Dendritic cell treated with granulocyte-macrophage colony-stimulating factor and Interleukin-4, amounts not matched to agents 40 ng/mL and 50 ng/mL, for 4 days (primary cell): ENCODE measurements at regions of chr15 and their contacts with region 1.

Region 1: DNA sequence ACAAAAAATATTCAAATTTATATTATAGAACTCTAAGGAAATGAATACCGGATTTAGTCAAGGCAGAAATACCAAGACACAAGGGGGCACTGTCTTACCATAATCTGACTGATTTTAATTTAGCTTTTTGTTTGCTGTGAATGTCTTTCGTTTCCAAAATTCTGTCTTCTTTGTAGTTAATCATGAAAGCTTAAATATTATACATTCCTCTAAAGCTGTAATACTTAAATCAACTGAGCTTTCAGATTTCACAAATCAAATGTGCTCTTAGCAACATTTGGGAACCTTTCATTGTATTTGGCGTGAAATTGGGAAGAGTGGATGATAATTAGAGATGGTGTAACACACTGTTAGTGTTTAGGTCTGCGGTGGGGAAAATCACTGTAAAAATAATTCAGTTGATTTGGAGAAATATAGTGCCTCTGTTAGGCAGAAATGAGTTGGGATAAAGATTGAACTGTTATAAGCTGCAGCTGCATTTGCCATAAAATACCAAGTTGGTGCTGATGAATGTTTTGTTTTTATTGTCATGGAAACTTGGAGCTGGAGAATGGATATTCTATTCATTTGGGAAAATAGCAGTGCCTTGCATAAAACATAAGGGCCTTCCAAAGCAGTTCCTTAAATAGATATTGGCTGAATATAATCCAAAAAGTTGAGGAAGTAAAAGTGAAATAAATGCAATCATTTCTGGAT is 228.2 kb downstream of the TCF12 start:
- H3K4me3 Mint-ChIP-seq: peak overlapping the region; percentile 58
- H3K27ac Mint-ChIP-seq: peak overlapping the region; percentile 87
- H3K4me1 Mint-ChIP-seq: peaks cover 49% of the 10 kb centered on the region
- H3K27me3 Mint-ChIP-seq: no peaks in the 10 kb centered on the region

Region 2: GRCh38 chr15:57031605-57032004 is 115.0 kb before region 1 on chr15:
- intact Hi-C with region 1: no loop called
- H3K4me3 Mint-ChIP-seq: no peak overlapping the region
- H3K27ac Mint-ChIP-seq: no peak overlapping the region
- H3K4me1 Mint-ChIP-seq: peaks cover 32% of the 10 kb centered on the region
- H3K27me3 Mint-ChIP-seq: no peaks in the 10 kb centered on the region

Region 3: DNA sequence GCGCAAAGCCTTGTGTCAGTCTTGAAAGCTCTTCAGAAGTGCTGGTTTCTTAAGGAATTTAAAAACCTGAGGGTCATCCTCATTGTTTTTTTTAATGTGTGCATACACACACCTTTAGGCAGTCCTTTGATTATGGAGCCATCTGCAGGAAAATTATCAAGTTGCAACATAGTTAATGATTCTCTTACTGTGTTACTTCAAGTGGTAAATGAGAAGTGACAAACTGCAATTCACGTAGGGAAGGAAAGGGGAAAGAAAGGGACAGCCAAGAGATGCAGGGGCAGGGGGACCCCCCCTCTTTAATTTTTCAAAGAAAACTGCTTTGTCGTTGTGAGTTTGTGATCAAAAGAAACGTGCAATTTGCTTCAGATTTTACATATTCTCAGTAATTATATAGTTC is 67.2 kb after region 1 on chr15:
- intact Hi-C with region 1: loop called (anchors 2 kb)
- H3K4me3 Mint-ChIP-seq: no peak overlapping the region
- H3K27ac Mint-ChIP-seq: no peak overlapping the region
- H3K4me1 Mint-ChIP-seq: peaks cover 15% of the 10 kb centered on the region
- H3K27me3 Mint-ChIP-seq: no peaks in the 10 kb centered on the region

Region 4: DNA sequence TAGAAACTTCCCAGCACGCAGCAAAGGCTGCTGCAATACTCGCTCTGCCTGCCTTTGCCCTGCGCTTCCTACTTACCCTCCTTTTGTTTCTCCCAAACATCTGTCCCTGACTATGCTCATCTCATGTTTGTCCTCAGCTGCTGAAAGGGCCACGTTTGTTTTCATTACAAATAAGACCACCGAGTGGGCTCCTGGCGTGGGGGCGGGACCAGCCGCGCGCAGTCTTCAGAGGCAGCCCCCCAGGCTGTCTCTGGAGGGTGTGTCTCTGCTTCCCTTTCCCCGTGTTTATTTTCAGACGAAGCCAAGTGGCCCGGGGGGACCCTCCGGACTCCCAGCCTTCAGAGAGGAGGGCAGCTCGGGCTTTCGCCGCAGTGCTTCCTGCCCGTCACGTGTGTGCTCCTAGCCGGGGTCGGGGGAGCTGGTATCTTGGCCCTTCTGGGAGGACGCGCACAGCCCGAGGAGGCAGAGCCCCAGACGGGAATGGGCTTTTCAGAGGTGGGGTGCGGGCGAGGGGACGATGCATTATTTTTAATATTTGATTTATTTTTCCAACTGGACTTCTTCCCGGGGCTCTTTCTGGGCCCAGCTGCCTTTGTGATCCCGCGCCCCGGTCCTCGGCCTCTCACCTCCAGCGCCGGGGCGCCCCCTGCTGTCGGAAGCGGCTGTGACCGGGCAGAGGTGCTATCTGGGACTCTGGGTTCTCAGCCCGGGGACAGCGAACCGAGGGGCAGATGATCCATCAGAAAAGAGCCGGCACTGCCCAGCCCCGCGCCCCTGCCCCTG is 159.7 kb after region 1 on chr15:
- intact Hi-C with region 1: loop called (anchors 1 kb)
- H3K4me3 Mint-ChIP-seq: peak overlapping the region; percentile 82
- H3K27ac Mint-ChIP-seq: peak overlapping the region; percentile 86
- H3K4me1 Mint-ChIP-seq: peaks cover 62% of the 10 kb centered on the region
- H3K27me3 Mint-ChIP-seq: no peaks in the 10 kb centered on the region

Region 5: GRCh38 chr15:57527382-57528091 is 380.9 kb after region 1 on chr15:
- intact Hi-C with region 1: loop called (anchors 10 kb)
- H3K4me3 Mint-ChIP-seq: no peak overlapping the region
- H3K27ac Mint-ChIP-seq: no peak overlapping the region
- H3K4me1 Mint-ChIP-seq: no peaks in the 10 kb centered on the region
- H3K27me3 Mint-ChIP-seq: no peaks in the 10 kb centered on the region